Activated CD8-positive, alpha-beta T cell treated with anti-CD3 and anti-CD28 coated beads, Interleukin-2, amount 10 ng/mL, durations not matched to agents 7 days and 5 days (primary cell): ENCODE measurements at regions of chr4 and their contacts with region 1.

Region 1: GRCh38 chr4:88533937-88534750 is 10.6 kb upstream of the PYURF start:
- DNase-seq: no peak
- ATAC-seq: no peak
- H3K4me3 Mint-ChIP-seq: no peak overlapping the region
- H3K27ac Mint-ChIP-seq: no peak overlapping the region
- H3K4me1 Mint-ChIP-seq: peaks cover 1% of the 10 kb centered on the region
- H3K27me3 Mint-ChIP-seq: peaks cover 3% of the 10 kb centered on the region

Region 2: GRCh38 chr4:88378691-88379559 is 155.2 kb before region 1 on chr4 and contains the start of gene HERC6:
- CTCF ChIA-PET with region 1: no interaction called
- POLR2A ChIA-PET with region 1: no interaction called
- DNase-seq: peak; percentile 94
- ATAC-seq: peak; percentile 62
- H3K4me3 Mint-ChIP-seq: peak within 1 kb of the TSS; percentile 87
- H3K27ac Mint-ChIP-seq: peak within 1 kb of the TSS; percentile 93
- H3K4me1 Mint-ChIP-seq: peaks cover 58% of the 10 kb centered on the region
- H3K27me3 Mint-ChIP-seq: no peaks in the 10 kb centered on the region
- total RNA-seq, gene HERC6: 25.5 to 26.9 TPM

Region 3: GRCh38 chr4:88549815-88550214 is 15.7 kb after region 1 on chr4:
- CTCF ChIA-PET with region 1: interaction called, 16 read pairs
- POLR2A ChIA-PET with region 1: no interaction called
- DNase-seq: no peak
- ATAC-seq: no peak
- H3K4me3 Mint-ChIP-seq: no peak overlapping the region
- H3K27ac Mint-ChIP-seq: no peak overlapping the region
- H3K4me1 Mint-ChIP-seq: no peaks in the 10 kb centered on the region
- H3K27me3 Mint-ChIP-seq: peaks cover 2% of the 10 kb centered on the region

Region 4: DNA sequence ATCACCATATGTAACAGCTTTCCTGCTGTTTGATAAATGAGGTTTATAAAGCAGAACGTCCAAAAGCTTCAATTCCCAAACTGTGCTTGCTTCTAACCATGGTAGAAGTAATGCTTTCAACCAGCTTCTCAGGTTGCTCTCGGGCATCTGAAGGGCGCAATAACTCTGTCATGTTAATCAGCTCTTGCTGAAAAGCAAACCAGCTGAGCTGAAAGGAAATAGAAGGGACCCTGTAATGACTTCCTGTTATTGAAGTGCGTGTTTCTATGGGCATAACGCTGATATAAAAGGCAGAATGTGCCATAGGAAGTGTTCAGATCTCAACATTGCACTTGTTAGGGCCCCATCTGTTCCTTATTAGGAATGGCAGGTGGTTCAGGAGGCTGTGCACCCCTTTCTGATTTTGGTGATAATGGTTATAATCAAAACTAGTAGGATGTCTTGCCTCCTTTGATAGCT is 79.3 kb after region 1 on chr4:
- CTCF ChIA-PET with region 1: interaction called, 14 read pairs
- POLR2A ChIA-PET with region 1: no interaction called
- DNase-seq: peak; percentile 58
- ATAC-seq: peak; percentile 92
- H3K4me3 Mint-ChIP-seq: peak overlapping the region; percentile 42
- H3K27ac Mint-ChIP-seq: peak overlapping the region; percentile 85
- H3K4me1 Mint-ChIP-seq: peaks cover 54% of the 10 kb centered on the region
- H3K27me3 Mint-ChIP-seq: no peaks in the 10 kb centered on the region

Region 5: DNA sequence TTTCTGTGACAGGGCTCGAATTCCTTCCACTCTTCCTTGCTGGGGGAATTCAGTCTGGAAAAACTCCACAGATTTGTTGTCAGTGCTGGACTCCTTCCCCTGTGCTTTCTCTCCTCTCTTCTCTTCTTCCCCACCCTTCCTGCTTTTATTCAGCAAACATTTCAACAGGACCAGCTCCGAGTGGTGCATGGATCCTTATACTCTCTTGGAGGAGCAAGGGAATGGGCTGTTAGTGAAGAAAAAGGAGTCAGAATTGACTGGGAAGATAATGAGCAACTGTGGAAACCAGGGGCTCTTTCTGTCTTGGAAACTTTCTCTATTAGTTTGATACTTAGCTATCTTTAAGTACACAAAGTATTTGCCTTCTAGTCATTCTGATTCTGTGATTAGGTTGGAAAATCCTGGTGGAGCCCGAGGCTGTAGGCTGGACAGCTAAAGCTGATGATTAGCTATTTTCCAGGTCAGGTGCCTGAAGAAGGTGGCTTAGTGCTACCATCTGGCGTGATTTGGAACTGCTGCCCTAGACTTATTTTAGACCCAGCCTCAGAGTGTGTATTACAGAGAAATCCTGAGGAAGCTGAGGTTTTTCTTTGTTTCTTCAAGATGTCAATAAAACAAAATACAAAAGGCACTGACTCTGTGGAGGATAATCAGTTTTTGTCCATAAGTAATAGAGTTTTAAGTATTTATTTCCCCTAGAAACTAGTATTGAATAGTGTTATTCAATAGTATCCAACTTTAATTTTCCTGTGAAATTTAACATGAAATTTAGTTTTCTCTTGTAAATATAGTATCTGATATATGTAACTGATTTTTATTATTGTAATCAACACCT is 125.1 kb after region 1 on chr4:
- CTCF ChIA-PET with region 1: interaction called, 54 read pairs
- POLR2A ChIA-PET with region 1: no interaction called
- DNase-seq: peak; percentile 52
- ATAC-seq: peak; percentile 84
- H3K4me3 Mint-ChIP-seq: no peak overlapping the region
- H3K27ac Mint-ChIP-seq: no peak overlapping the region
- H3K4me1 Mint-ChIP-seq: peaks cover 10% of the 10 kb centered on the region
- H3K27me3 Mint-ChIP-seq: no peaks in the 10 kb centered on the region

Region 6: DNA sequence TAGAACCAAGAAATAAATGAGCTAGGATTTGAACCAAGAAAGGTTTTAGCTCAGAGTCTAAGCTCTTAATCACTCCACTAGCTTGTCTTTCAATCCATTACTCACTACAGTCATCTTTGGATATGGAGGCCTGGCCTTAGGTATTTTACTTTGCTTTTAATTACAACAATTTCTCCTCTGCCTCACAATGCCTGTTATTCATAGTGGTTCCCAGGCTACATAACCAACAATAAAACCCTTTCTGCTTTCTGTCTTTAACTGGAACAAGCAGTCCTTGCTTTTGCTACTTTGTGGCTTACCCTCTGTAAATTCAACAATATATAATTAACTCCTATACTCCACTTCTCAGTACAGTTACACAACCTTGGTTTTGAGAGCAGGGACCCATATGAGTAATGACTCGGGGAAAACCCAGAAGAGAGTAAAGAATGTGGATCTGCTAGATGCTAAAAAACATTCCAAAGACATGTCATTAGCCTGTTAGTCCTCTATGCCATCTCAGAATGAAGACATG is 258.2 kb after region 1 on chr4:
- CTCF ChIA-PET with region 1: interaction called, 21 read pairs
- POLR2A ChIA-PET with region 1: no interaction called
- DNase-seq: no peak
- ATAC-seq: no peak
- H3K4me3 Mint-ChIP-seq: no peak overlapping the region
- H3K27ac Mint-ChIP-seq: no peak overlapping the region
- H3K4me1 Mint-ChIP-seq: peaks cover 8% of the 10 kb centered on the region
- H3K27me3 Mint-ChIP-seq: peaks cover under 1% of the 10 kb centered on the region